GM12878 (cell line): ENCODE measurements at regions of chr16 and their contacts with region 1.

Region 1: DNA sequence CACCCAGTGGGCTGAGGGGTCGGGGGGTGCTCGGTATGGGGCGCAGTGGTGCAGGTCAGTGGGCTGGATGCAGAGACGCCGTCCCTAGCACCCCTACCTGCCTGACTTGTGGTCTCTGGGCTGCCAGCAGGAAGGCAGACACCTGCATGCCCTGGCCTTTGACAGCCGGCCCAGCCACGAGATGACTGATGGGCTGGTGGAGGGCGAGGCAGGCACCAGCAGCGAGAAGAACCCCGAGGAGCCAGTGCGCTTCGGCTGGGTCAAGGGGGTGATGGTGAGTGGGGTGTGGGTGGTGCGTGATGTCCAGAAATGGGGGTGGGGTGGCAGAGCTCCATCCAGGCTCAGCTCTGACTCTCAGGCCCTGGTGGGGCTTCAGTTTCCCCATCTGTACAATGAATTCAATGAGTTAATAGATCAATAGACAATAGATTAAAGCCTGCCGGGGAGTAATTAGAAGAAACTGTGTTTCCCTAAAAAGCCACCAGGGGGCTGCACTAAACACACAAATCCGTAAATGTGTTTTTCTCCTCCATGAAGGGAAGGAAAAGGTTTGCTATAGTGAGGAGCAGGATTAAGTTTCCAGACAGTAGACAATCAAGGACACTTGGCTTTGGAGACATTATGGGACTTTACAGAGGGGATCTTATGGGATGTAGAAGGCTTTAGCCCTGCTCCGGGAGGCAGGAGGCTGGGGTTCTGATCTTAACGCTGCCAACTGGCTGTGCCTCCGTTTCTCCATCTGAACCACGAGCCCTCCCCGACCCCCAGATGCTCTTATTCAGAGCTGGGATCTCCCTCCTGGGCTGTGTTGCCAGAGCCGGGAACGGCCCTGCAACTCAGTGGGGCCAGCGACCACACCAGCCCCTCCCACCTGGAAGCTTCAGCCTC is 2.2 kb downstream of the SLC12A3 start:
- DNase-seq: no peak
- ATAC-seq: peak; percentile 27
- H3K4me3 ChIP-seq: no peak overlapping the region
- H3K27ac ChIP-seq: no peak overlapping the region
- H3K4me1 ChIP-seq: peaks cover 35% of the 10 kb centered on the region
- H3K27me3 ChIP-seq: no peaks in the 10 kb centered on the region
- CTCF ChIP-seq: peak; percentile 65 to 75 (median 65)
- EP300 ChIP-seq: no peak
- POLR2A ChIP-seq: no peak
- RAD21 ChIP-seq: peak; percentile 88

Region 2: GRCh38 chr16:56789360-56789759 is 77.8 kb before region 1 on chr16:
- CTCF ChIA-PET with region 1: interaction called, 7 read pairs
- POLR2A ChIA-PET with region 1: no interaction called
- RAD21 ChIA-PET with region 1: interaction called, 5 read pairs
- SMC1A ChIA-PET with region 1: interaction called, 6 read pairs
- in situ Hi-C with region 1: no loop called
- intact Hi-C with region 1: loop called (anchors 5 kb)
- DNase-seq: no peak
- ATAC-seq: peak; percentile 69
- H3K4me3 ChIP-seq: no peak overlapping the region
- H3K27ac ChIP-seq: no peak overlapping the region
- H3K4me1 ChIP-seq: no peaks in the 10 kb centered on the region
- H3K27me3 ChIP-seq: no peaks in the 10 kb centered on the region
- CTCF ChIP-seq: peak; percentile 28 to 51 (median 31); a peak in 3 of 6 replicates
- EP300 ChIP-seq: no peak
- POLR2A ChIP-seq: no peak
- RAD21 ChIP-seq: peak; percentile 53

Region 3: DNA sequence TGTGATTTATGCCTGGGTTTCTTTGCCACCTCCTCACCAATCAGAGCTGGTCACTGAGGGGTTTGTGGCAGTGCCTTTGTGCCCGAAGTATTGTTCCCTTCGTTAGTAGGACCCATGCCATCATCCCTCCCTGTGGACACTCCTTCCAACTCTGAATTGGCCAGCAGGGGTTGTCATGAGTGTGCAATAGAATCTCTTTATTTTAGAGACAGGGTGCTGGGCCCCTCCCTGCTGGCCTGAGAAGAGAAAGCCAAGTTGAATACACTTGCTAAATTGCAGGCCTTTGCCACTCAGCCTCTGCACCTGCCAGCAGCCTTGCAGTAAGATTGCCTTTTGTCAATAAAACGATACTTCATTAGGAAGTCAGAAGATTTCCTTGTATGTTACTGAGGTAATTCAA is 42.9 kb before region 1 on chr16:
- CTCF ChIA-PET with region 1: no interaction called
- POLR2A ChIA-PET with region 1: no interaction called
- RAD21 ChIA-PET with region 1: no interaction called
- SMC1A ChIA-PET with region 1: no interaction called
- in situ Hi-C with region 1: no loop called
- intact Hi-C with region 1: no loop called
- DNase-seq: no peak
- ATAC-seq: peak; percentile 58
- H3K4me3 ChIP-seq: no peak overlapping the region
- H3K27ac ChIP-seq: no peak overlapping the region
- H3K4me1 ChIP-seq: no peaks in the 10 kb centered on the region
- H3K27me3 ChIP-seq: no peaks in the 10 kb centered on the region
- CTCF ChIP-seq: 0 out of 6 replicates have a peak, but pooled peaks of 1 of the 3 experiments have one; percentile 10
- EP300 ChIP-seq: no peak
- POLR2A ChIP-seq: no peak
- RAD21 ChIP-seq: no peak

Region 4: DNA sequence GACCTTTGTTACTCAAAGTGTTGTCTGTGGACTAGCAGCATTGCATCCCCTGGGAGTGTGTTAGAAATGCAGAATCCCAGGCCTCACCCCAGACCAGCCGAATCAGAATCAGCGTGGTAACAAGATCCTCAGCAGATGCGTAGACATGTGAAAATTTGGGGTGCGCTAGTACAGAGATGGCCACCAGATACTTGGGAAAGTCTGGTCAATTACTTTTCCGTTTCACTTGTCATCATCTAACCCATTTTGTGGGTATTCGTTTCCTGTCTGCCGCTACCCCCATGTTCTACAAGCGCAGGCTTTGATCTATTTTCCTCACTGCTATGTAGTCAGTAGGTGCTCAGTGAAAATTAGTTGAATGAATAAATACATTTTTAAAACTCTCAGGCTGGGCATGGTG is 31.7 kb after region 1 on chr16:
- CTCF ChIA-PET with region 1: interaction called, 6 read pairs
- POLR2A ChIA-PET with region 1: interaction called, 10 read pairs
- RAD21 ChIA-PET with region 1: no interaction called
- SMC1A ChIA-PET with region 1: interaction called, 4 read pairs
- in situ Hi-C with region 1: no loop called
- intact Hi-C with region 1: no loop called
- DNase-seq: peak; percentile 77
- ATAC-seq: peak; percentile 86
- H3K4me3 ChIP-seq: no peak overlapping the region
- H3K27ac ChIP-seq: no peak overlapping the region
- H3K4me1 ChIP-seq: peaks cover 13% of the 10 kb centered on the region
- H3K27me3 ChIP-seq: peaks cover 0 to 6% of the 10 kb centered on the region in 2 experiments; a peak in 2 of 4 replicates
- CTCF ChIP-seq: no peak
- EP300 ChIP-seq: no peak
- POLR2A ChIP-seq: no peak
- RAD21 ChIP-seq: no peak

Region 5: GRCh38 chr16:56931892-56932720 is 64.9 kb after region 1 on chr16 and contains the start of gene HERPUD1:
- CTCF ChIA-PET with region 1: interaction called, 15 read pairs
- POLR2A ChIA-PET with region 1: interaction called, 10 read pairs
- RAD21 ChIA-PET with region 1: interaction called, 12 read pairs
- SMC1A ChIA-PET with region 1: interaction called, 17 read pairs
- in situ Hi-C with region 1: no loop called
- intact Hi-C with region 1: loop called (anchors 1 kb)
- DNase-seq: peak; percentile 89
- ATAC-seq: peak; percentile 84
- H3K4me3 ChIP-seq: peak within 1 kb of the TSS; percentile 92
- H3K27ac ChIP-seq: peak within 1 kb of the TSS; percentile 88
- H3K4me1 ChIP-seq: peaks cover 20% of the 10 kb centered on the region
- H3K27me3 ChIP-seq: no peaks in the 10 kb centered on the region
- CTCF ChIP-seq: no peak
- EP300 ChIP-seq: no peak
- POLR2A ChIP-seq: peak; percentile 99
- RAD21 ChIP-seq: no peak
- polyA plus RNA-seq, gene HERPUD1: 32.6 to 68.1 TPM

Region 6: GRCh38 chr16:56944954-56945839 is 78.0 kb after region 1 on chr16:
- CTCF ChIA-PET with region 1: interaction called, 247 read pairs
- POLR2A ChIA-PET with region 1: interaction called, 11 read pairs
- RAD21 ChIA-PET with region 1: interaction called, 126 read pairs
- SMC1A ChIA-PET with region 1: interaction called, 86 read pairs
- in situ Hi-C with region 1: loop called (anchors 5 kb)
- intact Hi-C with region 1: no loop called
- DNase-seq: peak; percentile 61
- ATAC-seq: peak; percentile 34
- H3K4me3 ChIP-seq: no peak overlapping the region
- H3K27ac ChIP-seq: peak overlapping the region; percentile 40; the same call in 1 of the 2 replicates
- H3K4me1 ChIP-seq: peaks cover 47% of the 10 kb centered on the region
- H3K27me3 ChIP-seq: no peaks in the 10 kb centered on the region
- CTCF ChIP-seq: no peak
- EP300 ChIP-seq: peak in 1 of 2 experiments; percentile 55; a peak in 1 of 4 replicates
- POLR2A ChIP-seq: peak; percentile 76
- RAD21 ChIP-seq: no peak